ENCODE measurements at regions of chr10 and their contacts with region 1.

Region 1: GRCh38 chr10:70115948-70116682 is 16.5 kb downstream of the AIFM2 start:
- DNase-seq: peak; percentile 45 to 64
- ATAC-seq: peak; percentile 76 to 86
- H3K4me3 ChIP-seq: no peak overlapping the region
- H3K27ac ChIP-seq: no peak overlapping the region
- H3K4me1 ChIP-seq: no peaks in the 10 kb centered on the region
- CTCF ChIP-seq: peak; percentile 75
- EP300 ChIP-seq: no peak
- POLR2A ChIP-seq: no peak
- RAD21 ChIP-seq: peak; percentile 44 to 49

Region 2: DNA sequence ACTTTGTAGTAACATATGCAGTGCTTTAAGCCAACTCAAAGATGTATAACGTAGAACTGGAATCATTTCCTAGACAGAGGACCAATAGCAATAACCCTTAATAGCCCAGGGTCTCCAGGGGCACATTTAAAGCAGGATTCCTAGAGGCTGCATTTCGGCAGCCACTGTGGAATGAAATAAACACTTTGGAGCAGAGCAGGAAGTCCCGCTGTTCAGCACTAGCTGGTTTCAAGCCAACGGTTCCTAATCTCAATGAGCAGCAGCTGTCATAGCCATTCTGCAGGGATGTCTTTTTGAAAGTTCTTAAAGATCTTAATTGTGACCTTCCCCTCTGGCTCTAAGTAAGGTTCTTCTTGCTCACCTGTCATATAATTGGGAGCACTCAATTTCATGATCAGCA is 81.9 kb before region 1 on chr10:
- CTCF ChIA-PET with region 1: no interaction called
- POLR2A ChIA-PET with region 1: no interaction called
- DNase-seq: no peak
- ATAC-seq: no peak
- H3K4me3 ChIP-seq: no peak overlapping the region
- H3K27ac ChIP-seq: no peak overlapping the region
- H3K4me1 ChIP-seq: no peaks in the 10 kb centered on the region
- CTCF ChIP-seq: no peak
- EP300 ChIP-seq: no peak
- POLR2A ChIP-seq: no peak
- RAD21 ChIP-seq: no peak

Region 3: GRCh38 chr10:70078329-70078728 is 37.8 kb before region 1 on chr10:
- CTCF ChIA-PET with region 1: interaction called, 21 read pairs
- POLR2A ChIA-PET with region 1: no interaction called
- DNase-seq: no peak
- ATAC-seq: no peak
- H3K4me3 ChIP-seq: no peak overlapping the region
- H3K27ac ChIP-seq: no peak overlapping the region
- H3K4me1 ChIP-seq: no peaks in the 10 kb centered on the region
- CTCF ChIP-seq: no peak
- EP300 ChIP-seq: no peak
- POLR2A ChIP-seq: no peak
- RAD21 ChIP-seq: no peak

Region 4: GRCh38 chr10:70084189-70084588 is 31.9 kb before region 1 on chr10:
- CTCF ChIA-PET with region 1: interaction called, 21 read pairs
- POLR2A ChIA-PET with region 1: no interaction called
- DNase-seq: peak in 1 of 2 experiments; percentile 28
- ATAC-seq: peak in 1 of 2 experiments; percentile 51; a peak in 3 of 6 replicates
- H3K4me3 ChIP-seq: no peak overlapping the region
- H3K27ac ChIP-seq: peak overlapping the region in 1 of 2 experiments; percentile 60; a peak in 3 of 6 replicates
- H3K4me1 ChIP-seq: peaks cover 38% of the 10 kb centered on the region
- CTCF ChIP-seq: peak; percentile 46
- EP300 ChIP-seq: no peak
- POLR2A ChIP-seq: no peak
- RAD21 ChIP-seq: peak; percentile 37 to 46; a peak in 3 of 5 replicates

Region 5: GRCh38 chr10:70132098-70133029 is 16.2 kb after region 1 on chr10 and contains the start of gene AIFM2:
- CTCF ChIA-PET with region 1: interaction called, 228 read pairs
- POLR2A ChIA-PET with region 1: no interaction called
- DNase-seq: peak; percentile 83 to 92
- ATAC-seq: peak; percentile 74 to 86
- H3K4me3 ChIP-seq: peak within 1 kb of the TSS; percentile 83
- H3K27ac ChIP-seq: peak within 1 kb of the TSS; percentile 92 to 94
- H3K4me1 ChIP-seq: peaks cover 28% of the 10 kb centered on the region
- CTCF ChIP-seq: no peak
- EP300 ChIP-seq: no peak
- POLR2A ChIP-seq: peak; percentile 29
- RAD21 ChIP-seq: no peak
- polyA plus RNA-seq, gene AIFM2: 27.6 and 30.0 TPM in 2 replicates

Region 6: DNA sequence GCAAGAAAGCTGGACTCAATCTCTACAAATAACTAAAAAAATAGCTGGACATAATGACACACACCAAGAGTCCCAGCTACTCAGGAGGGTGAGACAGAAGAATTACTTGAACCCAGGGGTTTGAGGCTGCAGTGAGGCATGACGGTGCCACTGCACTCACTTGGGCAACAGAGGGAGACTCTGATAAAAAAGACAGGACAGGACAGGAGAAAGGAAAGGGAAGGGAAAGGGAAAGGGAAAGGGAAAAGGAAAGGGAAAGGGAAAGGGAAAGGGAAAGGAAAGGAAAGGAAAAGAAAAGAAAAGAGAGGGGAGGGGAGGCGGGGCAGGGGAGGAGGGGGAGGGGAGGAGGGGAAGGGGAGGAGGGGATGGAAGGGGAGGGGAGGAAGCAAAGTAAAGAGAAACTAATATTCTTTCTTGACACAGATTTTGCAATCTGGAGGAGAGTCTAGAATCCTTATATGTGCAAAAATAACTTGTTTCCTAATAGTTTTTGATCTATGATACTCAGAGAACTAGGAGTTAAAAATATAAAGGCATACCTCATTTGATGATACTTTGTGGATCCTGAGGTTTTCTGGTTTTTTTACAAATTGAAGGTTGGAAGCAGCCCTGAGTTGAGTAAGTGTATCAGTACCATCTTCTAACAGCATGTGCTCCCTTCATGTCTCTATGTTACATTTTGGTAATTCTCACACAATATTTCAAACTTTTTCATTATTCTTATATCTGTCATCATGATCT is 46.2 kb after region 1 on chr10:
- CTCF ChIA-PET with region 1: interaction called, 15 read pairs
- POLR2A ChIA-PET with region 1: no interaction called
- DNase-seq: no peak
- ATAC-seq: no peak
- H3K4me3 ChIP-seq: no peak overlapping the region
- H3K27ac ChIP-seq: no peak overlapping the region
- H3K4me1 ChIP-seq: peaks cover 36% of the 10 kb centered on the region
- CTCF ChIP-seq: no peak
- EP300 ChIP-seq: no peak
- POLR2A ChIP-seq: no peak
- RAD21 ChIP-seq: no peak

Region 7: DNA sequence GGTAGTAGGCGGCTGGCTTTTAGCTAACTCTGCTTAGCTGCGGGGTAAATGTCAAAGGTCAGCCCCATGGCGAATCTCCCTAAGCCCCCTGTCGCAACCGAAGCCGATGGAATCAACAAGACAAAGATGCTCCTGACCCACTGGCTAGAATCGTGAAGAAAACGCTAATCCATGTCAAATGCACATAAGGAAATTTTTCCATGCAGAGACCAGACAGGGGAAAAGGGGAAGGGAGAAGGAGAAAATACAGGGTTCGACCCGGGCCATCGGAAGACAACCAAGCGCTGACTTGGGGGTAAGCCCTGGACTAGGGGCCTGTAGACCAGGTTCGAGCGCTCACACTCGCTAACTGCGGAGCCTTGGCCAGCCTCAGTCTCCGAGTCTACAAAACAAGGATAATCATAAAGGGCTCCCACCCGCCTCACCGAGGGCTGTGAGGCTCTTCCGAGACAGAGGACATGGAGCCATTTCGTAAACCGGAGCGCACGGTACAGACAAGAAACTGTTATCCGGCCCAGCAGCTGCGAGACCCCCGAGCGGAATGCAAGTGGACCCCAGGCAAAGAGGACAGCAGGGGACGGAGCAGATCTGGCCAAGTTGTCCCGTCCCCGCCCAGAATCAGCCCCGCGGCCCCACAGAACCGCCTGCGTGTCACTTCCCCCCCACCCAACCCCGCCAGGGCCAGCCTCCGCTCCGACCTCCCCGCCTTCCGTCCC is 53.7 kb after region 1 on chr10:
- CTCF ChIA-PET with region 1: interaction called, 10 read pairs
- POLR2A ChIA-PET with region 1: no interaction called
- DNase-seq: no peak
- ATAC-seq: peak; percentile 61 to 64
- H3K4me3 ChIP-seq: peak overlapping the region; percentile 92
- H3K27ac ChIP-seq: peak overlapping the region; percentile 80 to 89
- H3K4me1 ChIP-seq: peaks cover 22% of the 10 kb centered on the region; the same call in 2 of the 3 replicates
- CTCF ChIP-seq: no peak
- EP300 ChIP-seq: no peak
- POLR2A ChIP-seq: no peak
- RAD21 ChIP-seq: no peak

Region 8: GRCh38 chr10:70183304-70183703 is 67.2 kb after region 1 on chr10:
- CTCF ChIA-PET with region 1: no interaction called
- POLR2A ChIA-PET with region 1: no interaction called
- DNase-seq: no peak
- ATAC-seq: no peak
- H3K4me3 ChIP-seq: no peak overlapping the region
- H3K27ac ChIP-seq: no peak overlapping the region
- H3K4me1 ChIP-seq: no peaks in the 10 kb centered on the region
- CTCF ChIP-seq: no peak
- EP300 ChIP-seq: no peak
- POLR2A ChIP-seq: no peak
- RAD21 ChIP-seq: no peak